Endothelial cell of umbilical vein (primary cell): ENCODE measurements at regions of chr15 and their contacts with region 1.

Region 1: DNA sequence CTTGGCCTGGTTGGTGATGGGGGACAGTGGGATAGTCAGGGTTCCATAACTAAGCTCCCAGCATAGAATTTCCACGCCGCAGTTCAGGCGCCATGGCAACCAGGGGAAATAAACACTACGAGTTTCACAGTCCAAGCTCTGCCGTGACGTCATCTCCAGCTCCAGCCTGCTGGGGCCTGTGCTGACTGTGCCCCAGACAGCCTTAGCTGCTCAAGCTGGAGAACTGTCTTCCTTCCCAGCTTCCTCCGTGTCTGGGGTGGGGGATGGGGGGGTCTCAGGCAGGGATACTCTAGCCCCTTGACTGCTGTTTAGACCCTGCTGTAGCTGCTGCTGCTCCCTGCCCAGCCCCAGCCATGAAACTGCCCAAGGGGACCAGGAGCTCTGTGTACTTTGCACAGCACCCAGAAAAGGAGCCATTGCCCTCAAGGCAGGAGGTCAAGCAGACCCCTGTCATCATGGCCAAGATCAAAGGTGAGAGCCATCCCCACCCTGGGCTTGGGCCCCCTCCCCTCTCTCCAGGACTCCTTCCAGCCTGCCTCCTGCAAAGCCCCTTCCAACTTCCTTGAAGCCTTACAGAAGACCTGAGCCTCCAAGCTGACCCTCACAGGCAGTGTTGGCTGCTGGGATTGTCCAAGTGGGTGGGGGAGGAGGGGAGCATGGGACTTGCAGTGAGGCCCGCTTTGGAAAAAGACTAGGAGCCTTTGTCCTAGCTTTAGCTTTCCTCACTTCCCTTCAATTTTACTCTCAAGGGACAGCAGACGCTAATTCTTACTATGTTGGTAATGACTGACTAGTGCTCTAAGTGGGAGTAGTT is 11.4 kb upstream of the CSPG4 start:
- DNase-seq: peak; percentile 84
- H3K4me3 ChIP-seq: no peak overlapping the region
- H3K27ac ChIP-seq: no peak overlapping the region
- H3K4me1 ChIP-seq: no peaks in the 10 kb centered on the region
- H3K27me3 ChIP-seq: peaks cover 4 to 7% of the 10 kb centered on the region in 2 experiments
- CTCF ChIP-seq: no peak
- POLR2A ChIP-seq: no peak

Region 2: GRCh38 chr15:75921729-75922703 is 198.0 kb after region 1 on chr15:
- CTCF ChIA-PET with region 1: interaction called, 5 read pairs
- POLR2A ChIA-PET with region 1: no interaction called
- dilution Hi-C with region 1: no loop called
- intact Hi-C with region 1: loop called (anchors 2 kb)
- DNase-seq: peak; percentile 77
- H3K4me3 ChIP-seq: no peak overlapping the region
- H3K27ac ChIP-seq: no peak overlapping the region
- H3K4me1 ChIP-seq: peaks cover 12% of the 10 kb centered on the region
- H3K27me3 ChIP-seq: no peaks in the 10 kb centered on the region
- CTCF ChIP-seq: peak; percentile 34 to 44
- POLR2A ChIP-seq: no peak